ENCODE measurements at regions of chr17 and their contacts with region 1.

Region 1: GRCh38 chr17:74305865-74306654 is 20.0 kb upstream of the KIF19 start:
- DNase-seq: no peak
- ATAC-seq: no peak

Region 2: DNA sequence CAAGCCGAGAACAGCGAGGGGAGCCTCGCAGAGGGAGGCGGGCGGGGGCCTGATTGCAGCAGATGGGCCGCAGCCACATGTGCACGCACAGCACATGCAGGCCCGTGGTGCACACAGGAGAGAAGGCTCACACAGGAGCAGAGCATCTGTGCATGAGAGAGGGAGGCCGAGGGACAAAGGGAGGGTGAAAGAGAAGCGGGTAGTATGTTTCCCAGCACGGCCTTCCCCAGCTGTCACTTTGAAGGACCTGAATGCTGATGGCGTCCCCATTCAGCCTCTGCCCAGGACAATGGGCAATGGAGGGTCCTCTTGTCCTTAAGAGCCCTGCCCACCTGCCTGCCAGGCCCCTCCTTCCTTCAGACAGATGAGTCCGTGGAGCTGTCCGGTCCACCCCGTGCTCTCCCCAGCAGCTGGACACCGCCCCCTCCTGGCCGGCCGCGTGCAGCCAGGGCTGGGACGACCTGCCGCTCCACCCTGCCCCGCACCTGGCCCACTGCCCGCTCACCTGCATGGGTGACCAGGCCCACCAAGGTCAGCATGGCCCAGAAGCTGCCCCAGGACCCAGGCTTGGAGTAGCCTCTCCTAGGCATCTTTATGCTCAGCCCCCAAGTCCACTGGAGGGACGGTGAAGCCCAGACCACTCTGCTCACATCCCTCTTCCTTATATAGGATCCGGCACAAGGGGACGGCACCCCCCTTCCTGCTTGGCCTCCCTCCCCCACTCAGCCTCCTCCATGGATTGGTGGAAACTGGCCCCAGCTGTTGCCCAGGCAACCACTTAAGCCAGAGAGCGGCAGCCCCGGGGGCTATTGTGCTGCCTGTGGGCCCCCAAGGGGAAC is 55.4 kb after region 1 on chr17 and contains the start of gene BTBD17:
- intact Hi-C with region 1: loop called (anchors 5 kb)
- DNase-seq: peak; percentile 80
- ATAC-seq: peak; percentile 92
- total RNA-seq, gene BTBD17: not detected

Region 3: DNA sequence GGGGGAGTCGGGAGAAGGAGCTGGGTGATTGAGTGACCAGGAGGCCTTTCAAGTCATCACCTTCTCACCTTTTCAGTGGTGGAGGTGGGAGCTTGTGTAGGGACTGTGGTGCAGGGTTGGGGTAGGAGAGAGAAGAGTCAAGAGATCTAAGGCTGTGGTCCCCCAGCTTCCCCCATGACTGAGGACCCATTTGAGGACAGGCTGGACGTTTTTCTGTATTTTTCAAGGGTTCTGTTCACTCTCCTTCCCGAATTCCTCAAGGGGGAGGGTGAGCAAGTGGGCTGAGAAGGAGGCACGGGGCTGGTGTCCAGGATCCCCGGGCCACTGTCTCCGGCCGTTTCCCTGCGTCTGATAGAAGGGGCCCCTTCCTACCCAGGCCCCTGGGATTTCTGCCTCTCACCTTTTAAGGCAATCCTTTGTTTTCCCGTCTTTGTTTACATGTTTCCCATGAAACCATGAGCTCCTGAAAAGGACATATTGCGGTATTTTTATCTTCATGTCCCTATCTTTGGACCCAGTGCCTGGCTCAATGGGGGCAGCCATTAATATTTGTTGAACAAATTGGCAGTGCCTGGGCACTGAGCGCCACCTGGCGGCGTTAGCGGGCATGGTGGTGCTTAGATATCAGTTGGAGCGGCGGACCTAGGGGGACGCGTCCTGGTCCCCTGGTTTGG is 151.2 kb after region 1 on chr17:
- intact Hi-C with region 1: loop called (anchors 10 kb)
- DNase-seq: peak; percentile 92
- ATAC-seq: no peak

Region 4: GRCh38 chr17:74493381-74493833 is 187.3 kb after region 1 on chr17:
- intact Hi-C with region 1: loop called (anchors 10 kb)
- DNase-seq: peak; percentile 80
- ATAC-seq: peak; percentile 79